ENCODE measurements at regions of chr7 and their contacts with region 1.

Region 1: GRCh38 chr7:76185187-76185896 is 16.4 kb upstream of the SRRM3 start:
- DNase-seq: no peak
- ATAC-seq: no peak

Region 2: GRCh38 chr7:75776295-75776971 is 408.9 kb before region 1 on chr7:
- intact Hi-C with region 1: no loop called
- DNase-seq: no peak
- ATAC-seq: no peak

Region 3: GRCh38 chr7:76262683-76263402 is 77.5 kb after region 1 on chr7:
- intact Hi-C with region 1: loop called (anchors 10 kb)
- DNase-seq: peak; percentile 52
- ATAC-seq: peak; percentile 86